ENCODE measurements at regions of chr14 and their contacts with region 1.

Region 1: GRCh38 chr14:54488646-54489317 is at the start of gene GMFB:
- DNase-seq: peak; percentile 79 to 95 (median 87)
- ATAC-seq: peak; percentile 95
- H3K4me3 ChIP-seq: peak within 1 kb of the TSS; percentile 95
- H3K4me3 Mint-ChIP-seq: peak within 1 kb of the TSS; percentile 99
- H3K27ac ChIP-seq: peak within 1 kb of the TSS; percentile 68 to 84
- H3K27ac Mint-ChIP-seq: peak within 1 kb of the TSS; percentile 86
- H3K4me1 ChIP-seq: peaks cover 32% of the 10 kb centered on the region
- H3K4me1 Mint-ChIP-seq: peaks cover 70% of the 10 kb centered on the region
- H3K27me3 ChIP-seq: no peaks in the 10 kb centered on the region
- H3K27me3 Mint-ChIP-seq: no peaks in the 10 kb centered on the region
- CTCF ChIP-seq: no peak
- total RNA-seq, gene GMFB: 39.5 to 43.5 TPM

Region 2: GRCh38 chr14:53663709-53664108 is 825.1 kb before region 1 on chr14:
- CTCF ChIA-PET with region 1: no interaction called
- POLR2A ChIA-PET with region 1: no interaction called
- intact Hi-C with region 1: no loop called
- DNase-seq: no peak
- ATAC-seq: no peak
- H3K4me3 ChIP-seq: no peak overlapping the region
- H3K4me3 Mint-ChIP-seq: no peak overlapping the region
- H3K27ac ChIP-seq: no peak overlapping the region
- H3K27ac Mint-ChIP-seq: no peak overlapping the region
- H3K4me1 ChIP-seq: no peaks in the 10 kb centered on the region
- H3K4me1 Mint-ChIP-seq: no peaks in the 10 kb centered on the region
- H3K27me3 ChIP-seq: no peaks in the 10 kb centered on the region
- H3K27me3 Mint-ChIP-seq: peaks cover 3% of the 10 kb centered on the region
- CTCF ChIP-seq: no peak

Region 3: DNA sequence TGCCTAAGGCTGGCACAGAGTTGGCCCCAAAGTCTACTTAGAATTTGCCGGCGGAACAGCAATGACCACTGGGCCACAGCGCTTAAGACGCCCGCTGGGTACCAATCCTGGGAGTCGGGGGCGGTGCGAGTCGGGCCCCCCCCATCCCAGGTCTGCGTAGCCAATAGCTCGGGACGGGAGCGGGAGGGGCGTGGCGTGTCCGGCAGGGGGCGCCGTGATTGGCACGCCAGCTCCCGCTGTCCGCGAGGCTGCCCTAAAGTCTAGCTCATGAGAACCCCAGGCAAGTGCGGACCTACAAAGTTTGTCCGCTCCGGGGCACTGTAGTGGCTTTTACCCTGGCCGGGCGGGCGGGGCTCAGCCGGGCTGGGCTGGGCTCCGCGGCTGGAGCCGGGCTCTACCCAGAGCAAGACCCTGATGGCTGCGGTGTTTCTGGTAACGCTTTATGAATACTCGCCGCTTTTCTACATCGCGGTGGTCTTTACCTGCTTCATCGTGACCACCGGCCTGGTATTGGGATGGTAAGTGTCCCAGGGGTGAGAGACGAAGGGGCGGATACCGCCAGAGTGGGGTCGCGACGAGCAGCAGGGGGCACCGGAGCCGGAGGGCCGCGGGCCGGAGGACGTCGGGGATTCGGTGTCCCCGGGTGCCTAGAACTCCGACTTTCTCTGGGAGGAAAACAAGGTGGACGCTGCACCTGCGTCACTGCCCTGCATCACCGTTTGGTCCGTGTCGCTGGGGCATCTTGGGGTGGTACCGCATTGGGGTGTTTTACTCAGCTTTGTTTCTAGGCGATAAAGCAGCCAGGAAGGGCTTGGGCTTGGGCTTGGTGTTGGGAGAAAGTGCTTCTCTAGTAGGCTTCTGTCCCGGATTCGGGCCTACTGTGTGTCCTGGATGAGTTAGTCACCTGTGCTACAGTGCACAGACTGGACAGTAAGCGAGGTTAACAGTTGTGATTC is 21.0 kb after region 1 on chr14 and contains the start of gene CGRRF1:
- CTCF ChIA-PET with region 1: interaction called, 21 read pairs
- POLR2A ChIA-PET with region 1: interaction called, 56 read pairs
- intact Hi-C with region 1: loop called in 1 of 2 experiments (anchors 1 kb)
- DNase-seq: peak; percentile 87 to 97 (median 94)
- ATAC-seq: peak; percentile 95
- H3K4me3 ChIP-seq: peak within 1 kb of the TSS; percentile 79
- H3K4me3 Mint-ChIP-seq: peak within 1 kb of the TSS; percentile 96
- H3K27ac ChIP-seq: peak within 1 kb of the TSS; percentile 6 to 59
- H3K27ac Mint-ChIP-seq: peak within 1 kb of the TSS; percentile 78
- H3K4me1 ChIP-seq: peaks cover 31% of the 10 kb centered on the region
- H3K4me1 Mint-ChIP-seq: peaks cover 59% of the 10 kb centered on the region
- H3K27me3 ChIP-seq: no peaks in the 10 kb centered on the region
- H3K27me3 Mint-ChIP-seq: peaks cover 4% of the 10 kb centered on the region
- CTCF ChIP-seq: peak; percentile 64
- total RNA-seq, gene CGRRF1: 34.5 to 42.8 TPM